Activated CD4-positive, alpha-beta T cell treated with anti-CD3 and anti-CD28 coated beads for 36 hours (primary cell): ENCODE measurements at regions of chr13 and their contacts with region 1.

Region 1: GRCh38 chr13:52450012-52450792 is at the start of gene VPS36:
- DNase-seq: peak; percentile 96
- ATAC-seq: peak; percentile 77
- H3K4me3 Mint-ChIP-seq: peak within 1 kb of the TSS; percentile 88
- H3K27ac Mint-ChIP-seq: peak within 1 kb of the TSS; percentile 91
- H3K4me1 Mint-ChIP-seq: peaks cover 35% of the 10 kb centered on the region
- H3K27me3 Mint-ChIP-seq: peaks cover under 1% of the 10 kb centered on the region
- total RNA-seq, gene VPS36: 27.4 to 29.8 TPM

Region 2: GRCh38 chr13:51583875-51584730 is 866.1 kb before region 1 on chr13 and contains the start of gene WDFY2:
- CTCF ChIA-PET with region 1: no interaction called
- POLR2A ChIA-PET with region 1: no interaction called
- intact Hi-C with region 1: loop called in 1 of 2 experiments (anchors 2 kb)
- DNase-seq: peak; percentile 100
- ATAC-seq: peak; percentile 88
- H3K4me3 Mint-ChIP-seq: peak within 1 kb of the TSS; percentile 89
- H3K27ac Mint-ChIP-seq: peak within 1 kb of the TSS; percentile 95
- H3K4me1 Mint-ChIP-seq: peaks cover 37% of the 10 kb centered on the region
- H3K27me3 Mint-ChIP-seq: no peaks in the 10 kb centered on the region
- total RNA-seq, gene WDFY2: 7.4 to 9.5 TPM

Region 3: GRCh38 chr13:51895906-51896888 is 554.0 kb before region 1 on chr13:
- CTCF ChIA-PET with region 1: no interaction called
- POLR2A ChIA-PET with region 1: no interaction called
- intact Hi-C with region 1: loop called in 1 of 2 experiments (anchors 5 kb)
- DNase-seq: peak; percentile 69
- ATAC-seq: peak; percentile 78
- H3K4me3 Mint-ChIP-seq: no peak overlapping the region
- H3K27ac Mint-ChIP-seq: no peak overlapping the region
- H3K4me1 Mint-ChIP-seq: no peaks in the 10 kb centered on the region
- H3K27me3 Mint-ChIP-seq: peaks cover 5% of the 10 kb centered on the region

Region 4: GRCh38 chr13:52011632-52012511 is 438.3 kb before region 1 on chr13 and contains the start of gene ALG11:
- CTCF ChIA-PET with region 1: no interaction called
- POLR2A ChIA-PET with region 1: no interaction called
- intact Hi-C with region 1: loop called (anchors 1 kb)
- DNase-seq: peak; percentile 100
- ATAC-seq: peak; percentile 99
- H3K4me3 Mint-ChIP-seq: peak within 1 kb of the TSS; percentile 100
- H3K27ac Mint-ChIP-seq: peak within 1 kb of the TSS; percentile 91
- H3K4me1 Mint-ChIP-seq: peaks cover 20% of the 10 kb centered on the region
- H3K27me3 Mint-ChIP-seq: peaks cover 17% of the 10 kb centered on the region
- total RNA-seq, gene ALG11: 14.1 to 18.1 TPM

Region 5: GRCh38 chr13:52348983-52349780 is 101.0 kb before region 1 on chr13:
- CTCF ChIA-PET with region 1: interaction called, 4 read pairs
- POLR2A ChIA-PET with region 1: no interaction called
- intact Hi-C with region 1: loop called (anchors 2 to 5 kb)
- DNase-seq: peak; percentile 48
- ATAC-seq: peak; percentile 96
- H3K4me3 Mint-ChIP-seq: no peak overlapping the region
- H3K27ac Mint-ChIP-seq: no peak overlapping the region
- H3K4me1 Mint-ChIP-seq: peaks cover 2% of the 10 kb centered on the region
- H3K27me3 Mint-ChIP-seq: peaks cover 4% of the 10 kb centered on the region

Region 6: GRCh38 chr13:52617070-52618060 is 167.2 kb after region 1 on chr13:
- CTCF ChIA-PET with region 1: interaction called, 3 read pairs
- POLR2A ChIA-PET with region 1: no interaction called
- intact Hi-C with region 1: loop called (anchors 1 kb)
- DNase-seq: peak; percentile 91
- ATAC-seq: peak; percentile 96
- H3K4me3 Mint-ChIP-seq: peak overlapping the region; percentile 95
- H3K27ac Mint-ChIP-seq: peak overlapping the region; percentile 94
- H3K4me1 Mint-ChIP-seq: peaks cover 33% of the 10 kb centered on the region
- H3K27me3 Mint-ChIP-seq: no peaks in the 10 kb centered on the region